ENCODE measurements at regions of chr3 and their contacts with region 1.

Region 1: DNA sequence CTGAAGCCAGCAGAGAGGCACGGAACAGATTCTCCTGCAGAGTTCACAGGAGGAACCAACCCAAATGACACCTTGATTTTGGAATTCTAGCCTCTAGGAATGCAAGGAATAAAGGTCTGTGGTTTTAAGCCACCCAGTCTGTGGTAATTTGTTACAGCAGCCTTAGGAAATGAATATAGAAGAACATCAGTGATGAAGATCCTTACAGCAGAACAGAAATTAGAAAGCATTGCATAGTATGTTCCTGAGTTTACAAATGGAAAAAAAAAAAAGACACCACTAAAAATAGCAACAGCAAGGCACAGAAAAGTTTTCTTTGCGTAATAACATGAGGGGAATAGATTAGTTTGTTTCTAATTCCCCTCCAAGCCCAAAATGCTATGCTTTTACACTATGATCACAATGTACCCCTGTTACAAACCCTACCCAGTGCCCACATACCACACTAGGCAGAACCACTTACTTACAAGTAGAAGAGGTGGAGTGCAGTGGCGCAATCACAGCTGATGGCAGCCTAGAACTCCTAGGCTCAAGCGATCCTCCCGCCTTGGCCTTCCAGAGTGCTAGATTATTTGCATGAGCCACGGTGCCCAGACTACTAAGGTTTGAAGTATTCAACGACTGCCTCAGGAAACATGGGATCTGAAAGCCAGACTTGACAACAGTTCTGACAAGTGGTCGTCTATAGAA is 84.3 kb downstream of the SHQ1 start:
- DNase-seq: no peak
- H3K4me3 Mint-ChIP-seq: no peak overlapping the region
- H3K27ac Mint-ChIP-seq: no peak overlapping the region
- H3K4me1 Mint-ChIP-seq: peaks cover 12% of the 10 kb centered on the region
- H3K27me3 Mint-ChIP-seq: no peaks in the 10 kb centered on the region

Region 2: DNA sequence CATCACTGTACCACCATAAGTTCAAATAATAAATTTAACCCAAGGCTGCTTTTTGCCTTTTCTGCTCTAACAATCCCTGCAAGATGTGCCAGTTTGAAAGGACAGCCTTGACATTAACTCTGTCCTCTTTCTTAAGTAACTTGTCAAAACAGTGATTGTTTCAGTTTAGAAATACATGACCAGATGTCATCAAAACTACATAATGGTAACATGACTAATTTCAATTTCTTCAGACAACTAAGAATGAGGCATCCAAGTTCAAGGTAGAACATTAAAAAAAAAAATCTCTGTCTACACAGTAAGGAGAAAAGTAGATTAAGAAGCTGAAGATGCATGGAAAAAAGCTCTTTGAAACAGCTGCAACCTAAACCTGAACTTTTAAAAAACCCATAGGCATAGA is 37.0 kb after region 1 on chr3:
- intact Hi-C with region 1: loop called (anchors 5 kb)
- DNase-seq: no peak
- H3K4me3 Mint-ChIP-seq: no peak overlapping the region
- H3K27ac Mint-ChIP-seq: peak overlapping the region; percentile 31
- H3K4me1 Mint-ChIP-seq: peaks cover 8% of the 10 kb centered on the region
- H3K27me3 Mint-ChIP-seq: no peaks in the 10 kb centered on the region

Measured in activated T-helper 1 cell treated with anti-CD3 and anti-CD28 coated beads, Interleukin-12 subunit alpha, Interleukin-12 subunit beta, Interleukin-2, Interleukin-4 antibody, amounts not matched to agents 30 ng/mL and 10 ng/mL and 1 ng/mL, durations not matched to agents 14 hours and 24 hours and 36 hours (primary cell).